ENCODE measurements at regions of chr5 and their contacts with region 1.

Region 1: GRCh38 chr5:138178516-138179276 is at the starts of genes BRD8 and KIF20A:
- DNase-seq: peak; percentile 69
- ATAC-seq: peak; percentile 93
- H3K4me3 Mint-ChIP-seq: no peak within 1 kb of the TSS
- H3K27ac Mint-ChIP-seq: no peak within 1 kb of the TSS
- H3K4me1 Mint-ChIP-seq: peaks cover 4% of the 10 kb centered on the region
- H3K27me3 Mint-ChIP-seq: no peaks in the 10 kb centered on the region
- CTCF ChIP-seq: no peak
- total RNA-seq, gene BRD8: 63.5 and 77.8 TPM in 2 replicates
- total RNA-seq, gene KIF20A: 0.40 and 0.44 TPM in 2 replicates

Region 2: GRCh38 chr5:137888857-137889759 is 289.6 kb before region 1 on chr5 and contains the start of gene PKD2L2:
- CTCF ChIA-PET with region 1: no interaction called
- POLR2A ChIA-PET with region 1: no interaction called
- intact Hi-C with region 1: loop called (anchors 2 kb)
- DNase-seq: peak; percentile 84
- ATAC-seq: peak; percentile 98
- H3K4me3 Mint-ChIP-seq: peak within 1 kb of the TSS; percentile 92
- H3K27ac Mint-ChIP-seq: peak within 1 kb of the TSS; percentile 96
- H3K4me1 Mint-ChIP-seq: peaks cover 32% of the 10 kb centered on the region
- H3K27me3 Mint-ChIP-seq: no peaks in the 10 kb centered on the region
- CTCF ChIP-seq: no peak
- total RNA-seq, gene PKD2L2: not detected in 2 replicates

Region 3: GRCh38 chr5:138102454-138103318 is 76.0 kb before region 1 on chr5:
- CTCF ChIA-PET with region 1: no interaction called
- POLR2A ChIA-PET with region 1: no interaction called
- intact Hi-C with region 1: loop called (anchors 1 kb)
- DNase-seq: no peak
- ATAC-seq: peak; percentile 95
- H3K4me3 Mint-ChIP-seq: peak overlapping the region; percentile 6
- H3K27ac Mint-ChIP-seq: peak overlapping the region; percentile 43
- H3K4me1 Mint-ChIP-seq: peaks cover 23% of the 10 kb centered on the region
- H3K27me3 Mint-ChIP-seq: peaks cover 5% of the 10 kb centered on the region
- CTCF ChIP-seq: no peak

Region 4: GRCh38 chr5:138115254-138115653 is 63.4 kb before region 1 on chr5:
- CTCF ChIA-PET with region 1: no interaction called
- POLR2A ChIA-PET with region 1: no interaction called
- intact Hi-C with region 1: no loop called
- DNase-seq: no peak
- ATAC-seq: no peak
- H3K4me3 Mint-ChIP-seq: no peak overlapping the region
- H3K27ac Mint-ChIP-seq: no peak overlapping the region
- H3K4me1 Mint-ChIP-seq: no peaks in the 10 kb centered on the region
- H3K27me3 Mint-ChIP-seq: peaks cover 11% of the 10 kb centered on the region
- CTCF ChIP-seq: no peak

Region 5: DNA sequence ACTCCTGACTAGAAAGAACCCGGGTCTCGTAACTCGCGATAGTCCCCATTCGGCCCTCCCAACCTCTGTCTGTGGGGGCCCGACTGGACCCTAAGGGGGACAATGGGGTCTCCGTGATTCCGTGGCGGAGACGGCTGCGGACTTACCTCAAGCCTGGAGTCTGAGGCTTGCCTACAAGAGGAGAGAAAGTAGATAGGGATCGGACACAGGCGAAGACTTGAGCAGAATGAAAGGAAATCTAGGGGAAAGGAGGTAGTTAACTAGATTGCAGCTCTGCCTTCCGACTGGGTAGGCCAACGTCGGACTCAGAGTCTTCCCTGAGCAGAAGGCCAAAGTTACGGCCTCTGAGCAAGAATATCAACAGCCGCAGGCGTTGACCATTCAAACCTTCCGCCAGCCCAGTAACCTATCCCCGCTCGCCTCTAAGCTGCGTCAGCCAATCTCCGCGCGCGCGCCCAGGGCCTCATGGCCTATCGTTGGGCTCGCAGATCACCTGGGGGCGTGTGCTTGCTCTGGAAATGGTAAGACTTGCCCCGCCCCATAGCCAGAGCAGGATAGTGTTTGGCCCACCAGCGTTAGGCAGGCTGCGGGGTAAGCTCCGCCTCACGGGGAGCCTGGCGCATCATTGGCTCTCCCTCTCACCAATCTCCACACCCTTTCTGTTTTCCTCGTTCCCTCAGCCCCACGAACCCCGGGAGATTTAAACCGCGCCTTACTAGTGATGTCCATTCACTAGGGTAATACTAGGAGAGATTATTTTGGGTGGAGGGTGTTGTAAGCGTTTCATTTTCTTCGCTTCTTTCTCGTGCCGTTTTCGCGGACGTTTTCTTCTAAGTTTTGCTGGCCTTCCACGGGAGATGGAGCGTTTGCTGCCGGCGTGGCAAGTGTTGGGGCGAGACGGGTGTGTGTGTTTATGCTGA is 153.0 kb after region 1 on chr5 and contains the start of gene CDC25C:
- CTCF ChIA-PET with region 1: no interaction called
- POLR2A ChIA-PET with region 1: no interaction called
- intact Hi-C with region 1: loop called (anchors 1 kb)
- DNase-seq: peak; percentile 83
- ATAC-seq: peak; percentile 100
- H3K4me3 Mint-ChIP-seq: peak within 1 kb of the TSS; percentile 92
- H3K27ac Mint-ChIP-seq: peak within 1 kb of the TSS; percentile 78
- H3K4me1 Mint-ChIP-seq: peaks cover 15% of the 10 kb centered on the region
- H3K27me3 Mint-ChIP-seq: no peaks in the 10 kb centered on the region
- CTCF ChIP-seq: no peak
- total RNA-seq, gene CDC25C: 0.42 TPM in 1 of 2 replicates, not detected in the other

Region 6: DNA sequence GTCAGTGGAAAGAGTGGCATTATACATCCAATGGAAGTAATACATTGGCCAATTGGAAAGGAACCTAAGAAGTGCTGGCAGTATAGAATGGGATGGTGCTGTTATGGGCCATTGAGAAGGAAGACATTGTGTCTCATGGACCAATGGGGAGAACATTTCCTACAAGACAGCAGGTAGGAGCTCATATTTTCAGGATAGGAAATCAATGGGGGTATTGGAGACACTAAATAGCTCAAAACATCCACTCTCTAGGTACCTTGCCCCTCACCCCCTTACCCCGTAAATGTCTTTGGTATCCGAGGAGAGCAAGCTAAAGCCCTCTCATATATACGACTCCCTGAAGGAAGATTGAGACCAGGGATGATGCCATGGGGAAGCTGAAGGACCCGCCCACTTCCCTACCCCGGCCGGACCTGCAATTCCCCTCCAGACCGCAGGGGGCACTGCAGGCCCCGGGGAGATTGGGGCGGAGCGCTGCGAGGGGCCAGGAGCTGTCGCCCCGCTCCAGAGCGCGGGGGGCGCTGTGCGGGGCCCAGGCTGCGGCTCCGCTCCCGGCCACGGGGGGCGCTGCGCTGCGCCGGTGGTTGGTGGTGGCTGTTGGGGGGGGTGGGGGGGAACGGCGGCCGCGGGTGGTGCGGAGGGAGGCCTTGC is 173.5 kb after region 1 on chr5 and contains the start of gene KDM3B:
- CTCF ChIA-PET with region 1: interaction called, 5 read pairs
- POLR2A ChIA-PET with region 1: interaction called, 25 read pairs
- intact Hi-C with region 1: loop called (anchors 1 kb)
- DNase-seq: peak; percentile 99
- ATAC-seq: peak; percentile 86
- H3K4me3 Mint-ChIP-seq: peak within 1 kb of the TSS; percentile 92
- H3K27ac Mint-ChIP-seq: peak within 1 kb of the TSS; percentile 91
- H3K4me1 Mint-ChIP-seq: peaks cover 51% of the 10 kb centered on the region
- H3K27me3 Mint-ChIP-seq: no peaks in the 10 kb centered on the region
- CTCF ChIP-seq: peak; percentile 99
- total RNA-seq, gene KDM3B: 85.5 and 94.0 TPM in 2 replicates

Region 7: DNA sequence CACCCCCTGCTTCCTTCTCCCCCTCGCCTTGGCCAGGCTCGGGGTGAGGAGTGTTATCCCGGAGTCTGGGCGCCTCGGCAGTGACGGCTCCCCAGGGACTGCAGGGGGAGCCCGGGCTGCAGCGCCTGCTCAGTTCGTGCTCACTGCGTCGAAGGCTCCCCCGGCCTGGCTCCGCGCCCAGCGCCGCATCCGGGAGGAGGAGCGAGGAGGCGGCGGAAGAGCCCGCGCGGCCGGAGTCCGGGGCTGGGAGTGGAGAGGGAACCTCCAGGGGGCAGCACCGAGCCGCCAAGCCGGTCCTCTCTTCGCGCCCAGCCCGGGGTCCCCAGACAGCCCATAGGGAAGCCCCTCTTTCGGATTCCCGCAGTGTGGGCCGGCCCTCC is 285.3 kb after region 1 on chr5:
- CTCF ChIA-PET with region 1: no interaction called
- POLR2A ChIA-PET with region 1: no interaction called
- intact Hi-C with region 1: loop called (anchors 1 kb)
- DNase-seq: peak; percentile 92
- ATAC-seq: peak; percentile 56
- H3K4me3 Mint-ChIP-seq: peak overlapping the region; percentile 89
- H3K27ac Mint-ChIP-seq: peak overlapping the region; percentile 92
- H3K4me1 Mint-ChIP-seq: peaks cover 49% of the 10 kb centered on the region
- H3K27me3 Mint-ChIP-seq: no peaks in the 10 kb centered on the region
- CTCF ChIP-seq: peak; percentile 87

Region 8: GRCh38 chr5:138542956-138543729 is 364.4 kb after region 1 on chr5 and contains the start of gene ETF1:
- CTCF ChIA-PET with region 1: no interaction called
- POLR2A ChIA-PET with region 1: interaction called, 12 read pairs
- intact Hi-C with region 1: loop called (anchors 1 kb)
- DNase-seq: peak; percentile 97
- ATAC-seq: peak; percentile 90
- H3K4me3 Mint-ChIP-seq: peak within 1 kb of the TSS; percentile 100
- H3K27ac Mint-ChIP-seq: peak within 1 kb of the TSS; percentile 99
- H3K4me1 Mint-ChIP-seq: peaks cover 66% of the 10 kb centered on the region
- H3K27me3 Mint-ChIP-seq: no peaks in the 10 kb centered on the region
- CTCF ChIP-seq: no peak
- total RNA-seq, gene ETF1: 95.7 and 99.6 TPM in 2 replicates